Activated CD4-positive, alpha-beta memory T cell treated with anti-CD3 and anti-CD28 coated beads for 36 hours (primary cell): ENCODE measurements at regions of chr2 and their contacts with region 1.

Region 1: DNA sequence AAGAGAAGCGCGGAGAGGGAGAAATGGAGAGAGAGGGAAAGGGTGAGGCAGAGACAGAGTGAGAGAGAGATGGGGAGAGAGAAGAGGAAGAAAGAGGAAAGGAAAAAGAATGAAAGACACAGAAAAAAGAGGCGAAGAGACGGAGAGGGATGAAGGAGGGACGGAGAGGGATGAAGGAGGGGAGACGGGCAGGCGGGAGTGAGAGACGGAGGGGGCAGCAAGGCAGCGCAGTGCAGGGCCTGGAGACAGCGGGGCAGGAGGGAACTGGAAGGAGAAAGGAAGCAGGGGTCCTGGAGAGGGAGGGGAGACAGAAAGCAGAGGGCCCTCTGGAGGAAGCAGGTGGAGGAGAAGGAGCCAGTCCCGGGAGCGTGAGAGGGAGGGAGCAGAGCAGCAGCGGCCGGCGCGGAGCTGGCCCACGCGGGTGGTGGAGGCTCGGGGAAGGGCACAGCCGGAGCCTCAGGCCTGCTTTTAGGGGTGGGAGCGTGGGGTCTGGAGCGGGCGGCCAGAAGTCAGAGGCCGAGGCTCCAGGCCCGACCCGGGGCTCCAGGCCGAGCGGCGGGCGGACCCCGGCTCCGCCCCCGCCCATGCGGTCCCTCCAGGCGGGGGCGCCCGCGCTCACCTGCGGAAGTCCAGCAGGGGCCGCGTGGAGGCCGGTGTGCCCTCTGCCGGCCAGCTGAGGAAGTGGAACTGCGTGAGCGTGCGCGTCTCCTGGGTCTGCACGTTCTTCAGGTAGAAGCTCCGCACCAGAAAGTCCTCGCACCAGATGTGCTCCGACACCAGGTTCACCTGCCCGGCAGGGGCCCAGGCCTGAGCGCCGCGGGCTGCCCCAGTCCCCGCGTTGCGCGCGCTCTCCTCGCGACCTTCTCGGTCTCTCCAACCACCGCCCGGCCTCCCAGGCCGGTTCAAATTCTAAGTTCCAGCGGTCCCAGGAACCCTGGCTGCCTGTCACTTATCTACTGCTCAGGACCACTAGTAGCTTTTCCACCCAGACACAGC is 14.5 kb downstream of the PTPRN start:
- DNase-seq: peak; percentile 92
- H3K4me3 Mint-ChIP-seq: peak overlapping the region; percentile 55
- H3K27ac Mint-ChIP-seq: peak overlapping the region; percentile 21
- H3K4me1 Mint-ChIP-seq: peaks cover 11% of the 10 kb centered on the region
- H3K27me3 Mint-ChIP-seq: peaks cover 7% of the 10 kb centered on the region

Region 2: DNA sequence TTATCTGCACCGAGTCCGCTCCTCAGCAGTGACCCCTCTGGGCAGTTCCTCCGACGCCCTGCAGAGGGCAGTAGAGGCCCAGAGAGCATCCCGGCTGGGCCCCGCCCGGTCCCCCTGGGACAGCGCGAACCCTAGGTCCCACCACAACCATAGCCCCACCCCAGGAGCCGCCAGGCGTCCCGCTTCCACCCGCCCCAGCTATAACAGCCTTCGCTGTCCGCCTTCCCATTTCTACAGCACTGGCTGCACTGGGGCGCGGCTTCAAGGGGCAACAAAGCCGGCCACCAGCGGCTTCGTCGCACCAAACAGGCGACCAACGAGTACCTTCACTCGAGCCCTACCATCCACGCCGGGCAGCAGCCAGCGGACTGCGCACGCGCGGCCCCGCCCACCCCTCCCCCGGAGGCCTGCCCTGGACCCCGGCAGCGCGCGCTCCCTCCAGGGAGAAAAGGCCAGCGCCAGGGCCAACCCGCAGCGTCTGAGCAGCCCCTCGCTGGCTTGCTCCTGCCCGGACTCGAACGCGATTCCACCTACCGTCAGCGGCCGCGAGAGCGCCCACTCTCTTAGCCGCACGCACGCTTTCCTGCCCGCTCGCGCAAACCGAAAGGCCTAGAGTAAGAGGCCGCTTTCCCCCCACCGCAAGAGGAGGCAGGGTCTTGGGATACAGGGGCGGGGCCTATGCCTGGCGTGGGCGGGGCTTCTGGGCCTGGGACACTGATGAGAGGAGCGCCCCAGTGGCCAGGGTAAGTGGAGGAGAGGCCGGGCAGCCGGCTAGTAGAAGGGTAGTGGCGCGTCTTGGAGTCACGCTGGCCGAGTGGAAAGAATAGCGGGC is 134.3 kb before region 1 on chr2 and contains the start of gene NHEJ1:
- CTCF ChIA-PET with region 1: interaction called, 136 read pairs
- POLR2A ChIA-PET with region 1: interaction called, 5 read pairs
- intact Hi-C with region 1: loop called (anchors 1 kb)
- DNase-seq: peak; percentile 96
- H3K4me3 Mint-ChIP-seq: peak within 1 kb of the TSS; percentile 87
- H3K27ac Mint-ChIP-seq: peak within 1 kb of the TSS; percentile 92
- H3K4me1 Mint-ChIP-seq: peaks cover 14% of the 10 kb centered on the region
- H3K27me3 Mint-ChIP-seq: no peaks in the 10 kb centered on the region
- total RNA-seq, gene NHEJ1: 17.7 to 18.6 TPM

Region 3: DNA sequence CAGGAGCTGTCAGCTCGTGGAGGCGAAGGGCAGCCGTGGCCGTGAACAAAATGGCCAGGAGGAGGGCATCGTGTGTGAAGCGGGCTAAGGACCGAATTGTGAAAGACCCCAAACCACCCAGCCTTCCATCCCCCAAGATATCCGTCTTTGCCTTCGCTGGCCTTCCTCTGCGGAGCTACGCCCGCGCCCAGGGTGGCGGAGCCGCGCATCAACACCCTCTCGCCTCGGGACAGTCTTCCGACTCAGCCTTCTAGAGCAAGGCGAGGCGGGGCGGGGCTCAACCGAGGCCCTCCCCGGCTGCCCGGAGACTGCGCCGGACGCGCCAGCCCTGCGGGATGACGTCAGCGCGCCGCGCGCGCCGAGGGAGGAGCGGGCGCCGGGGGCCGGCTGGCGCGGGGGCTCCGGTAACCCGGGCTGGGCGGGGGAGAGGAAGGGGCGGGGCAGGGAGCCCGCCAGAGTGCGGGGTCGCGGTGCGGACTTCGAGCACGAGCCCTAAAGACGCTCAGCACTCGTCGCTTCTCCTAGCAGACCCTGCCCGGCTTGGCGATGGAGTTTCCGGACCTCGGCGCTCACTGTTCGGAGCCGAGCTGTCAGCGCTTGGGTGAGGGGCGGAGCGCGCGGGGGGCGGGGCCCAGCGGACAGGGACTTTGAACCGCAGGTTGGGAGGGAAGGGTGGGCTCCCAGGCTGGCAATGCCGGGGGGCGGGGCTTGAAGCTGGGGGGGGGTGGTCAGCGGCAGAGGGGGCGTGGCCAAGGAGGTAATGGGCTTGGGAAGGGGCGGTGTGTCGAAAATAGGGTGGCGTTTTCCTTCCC is 88.0 kb before region 1 on chr2 and contains the start of gene ZFAND2B:
- CTCF ChIA-PET with region 1: interaction called, 22 read pairs
- POLR2A ChIA-PET with region 1: interaction called, 3 read pairs
- intact Hi-C with region 1: no loop called
- DNase-seq: peak; percentile 95
- H3K4me3 Mint-ChIP-seq: peak within 1 kb of the TSS; percentile 94
- H3K27ac Mint-ChIP-seq: peak within 1 kb of the TSS; percentile 99
- H3K4me1 Mint-ChIP-seq: peaks cover 32% of the 10 kb centered on the region
- H3K27me3 Mint-ChIP-seq: no peaks in the 10 kb centered on the region
- total RNA-seq, gene ZFAND2B: 31.9 to 34.4 TPM

Region 4: DNA sequence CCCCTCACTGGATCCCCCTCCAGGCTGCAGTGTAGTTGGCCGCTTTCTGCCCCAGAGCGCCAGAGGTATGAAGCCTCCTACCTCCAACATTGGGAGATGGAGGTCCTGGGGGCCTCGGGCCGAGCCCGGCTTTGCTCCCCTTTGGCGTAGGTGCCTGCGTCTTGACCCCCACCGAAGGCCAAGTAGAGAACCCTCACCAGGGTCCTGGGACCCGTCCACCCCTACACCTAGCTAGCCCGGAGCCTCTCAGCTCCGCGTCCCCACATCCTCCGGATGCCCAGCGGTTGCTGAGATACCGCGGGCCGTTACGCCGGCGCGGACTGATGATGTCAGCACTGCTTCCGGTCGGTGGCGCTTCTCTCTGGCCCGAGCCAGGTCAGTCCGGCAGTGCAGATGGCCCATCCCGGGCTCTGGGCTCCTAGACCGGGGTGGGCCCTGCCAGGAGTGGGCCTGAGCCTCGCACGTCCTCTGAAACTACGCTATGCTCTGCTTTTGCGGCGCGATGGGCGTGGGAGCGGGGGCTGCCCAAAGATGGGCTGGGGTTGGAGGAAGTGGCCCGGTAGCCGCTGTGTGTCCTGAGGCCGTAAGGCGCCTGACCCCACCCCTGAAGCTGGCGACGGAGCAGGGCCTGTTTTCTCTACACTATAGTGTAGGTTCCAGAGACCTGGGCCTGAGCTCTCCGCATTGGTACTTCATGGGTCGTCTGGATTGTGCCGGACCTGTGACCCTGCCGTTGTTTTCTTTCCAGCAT is 49.3 kb before region 1 on chr2 and contains the starts of genes GLB1L and STK16:
- CTCF ChIA-PET with region 1: interaction called, 51 read pairs
- POLR2A ChIA-PET with region 1: interaction called, 9 read pairs
- intact Hi-C with region 1: no loop called
- DNase-seq: peak; percentile 95
- H3K4me3 Mint-ChIP-seq: peak within 1 kb of the TSS; percentile 98
- H3K27ac Mint-ChIP-seq: peak within 1 kb of the TSS; percentile 98
- H3K4me1 Mint-ChIP-seq: peaks cover 61% of the 10 kb centered on the region
- H3K27me3 Mint-ChIP-seq: no peaks in the 10 kb centered on the region
- total RNA-seq, gene GLB1L: 4.8 to 4.9 TPM
- total RNA-seq, gene STK16: 37.1 to 37.8 TPM

Region 5: GRCh38 chr2:219278655-219279516 is 15.8 kb before region 1 on chr2 and contains the start of gene DNAJB2:
- CTCF ChIA-PET with region 1: interaction called, 252 read pairs
- POLR2A ChIA-PET with region 1: interaction called, 34 read pairs
- intact Hi-C with region 1: loop called (anchors 1 kb)
- DNase-seq: peak; percentile 100
- H3K4me3 Mint-ChIP-seq: peak within 1 kb of the TSS; percentile 80
- H3K27ac Mint-ChIP-seq: peak within 1 kb of the TSS; percentile 95
- H3K4me1 Mint-ChIP-seq: peaks cover 43% of the 10 kb centered on the region
- H3K27me3 Mint-ChIP-seq: no peaks in the 10 kb centered on the region
- total RNA-seq, gene DNAJB2: 37.3 to 39.1 TPM

Region 6: GRCh38 chr2:219552382-219553167 is 257.9 kb after region 1 on chr2:
- CTCF ChIA-PET with region 1: no interaction called
- POLR2A ChIA-PET with region 1: no interaction called
- intact Hi-C with region 1: no loop called
- DNase-seq: peak; percentile 85
- H3K4me3 Mint-ChIP-seq: peak overlapping the region; percentile 68
- H3K27ac Mint-ChIP-seq: no peak overlapping the region
- H3K4me1 Mint-ChIP-seq: peaks cover 10% of the 10 kb centered on the region
- H3K27me3 Mint-ChIP-seq: peaks cover 37% of the 10 kb centered on the region